ENCODE measurements at regions of chr20 and their contacts with region 1.

Region 1: GRCh38 chr20:23050847-23051631 is 1.6 kb upstream of the THBD start:
- DNase-seq: peak; percentile 95
- ATAC-seq: peak; percentile 53

Region 2: GRCh38 chr20:22716821-22717351 is 334.2 kb before region 1 on chr20:
- intact Hi-C with region 1: loop called (anchors 5 kb)
- DNase-seq: no peak
- ATAC-seq: no peak

Region 3: GRCh38 chr20:22977059-22977785 is 73.8 kb before region 1 on chr20:
- intact Hi-C with region 1: loop called (anchors 2 kb)
- DNase-seq: no peak
- ATAC-seq: peak; percentile 95

Region 4: DNA sequence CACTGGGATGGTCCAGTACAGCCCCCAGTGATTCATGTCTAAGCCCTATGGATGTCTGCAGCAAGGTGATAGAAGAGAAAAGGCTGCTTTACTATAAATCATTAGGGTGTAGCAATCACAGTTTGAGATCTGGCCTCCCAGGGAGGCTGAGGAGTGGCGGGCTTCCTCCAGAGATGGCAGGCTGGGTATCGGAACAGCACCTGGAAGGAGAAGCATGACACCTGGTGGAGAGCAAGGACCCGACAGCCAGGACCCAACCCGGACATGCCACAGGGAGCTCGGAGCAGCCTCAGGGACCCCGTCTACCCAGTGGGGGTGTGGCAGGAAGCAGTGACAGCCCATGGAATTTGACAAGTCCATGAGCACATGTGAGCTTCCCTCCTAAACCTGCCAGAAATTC is 149.9 kb after region 1 on chr20:
- intact Hi-C with region 1: loop called (anchors 10 kb)
- DNase-seq: no peak
- ATAC-seq: peak; percentile 20

Region 5: GRCh38 chr20:23340524-23340923 is 289.5 kb after region 1 on chr20:
- intact Hi-C with region 1: loop called (anchors 5 kb)
- DNase-seq: peak; percentile 76
- ATAC-seq: peak; percentile 78

Measured in Right ventricle myocardium inferior (tissue), 1 donor.